ACHN (cell line): ENCODE measurements at regions of chr7 and their contacts with region 1.

Region 1: DNA sequence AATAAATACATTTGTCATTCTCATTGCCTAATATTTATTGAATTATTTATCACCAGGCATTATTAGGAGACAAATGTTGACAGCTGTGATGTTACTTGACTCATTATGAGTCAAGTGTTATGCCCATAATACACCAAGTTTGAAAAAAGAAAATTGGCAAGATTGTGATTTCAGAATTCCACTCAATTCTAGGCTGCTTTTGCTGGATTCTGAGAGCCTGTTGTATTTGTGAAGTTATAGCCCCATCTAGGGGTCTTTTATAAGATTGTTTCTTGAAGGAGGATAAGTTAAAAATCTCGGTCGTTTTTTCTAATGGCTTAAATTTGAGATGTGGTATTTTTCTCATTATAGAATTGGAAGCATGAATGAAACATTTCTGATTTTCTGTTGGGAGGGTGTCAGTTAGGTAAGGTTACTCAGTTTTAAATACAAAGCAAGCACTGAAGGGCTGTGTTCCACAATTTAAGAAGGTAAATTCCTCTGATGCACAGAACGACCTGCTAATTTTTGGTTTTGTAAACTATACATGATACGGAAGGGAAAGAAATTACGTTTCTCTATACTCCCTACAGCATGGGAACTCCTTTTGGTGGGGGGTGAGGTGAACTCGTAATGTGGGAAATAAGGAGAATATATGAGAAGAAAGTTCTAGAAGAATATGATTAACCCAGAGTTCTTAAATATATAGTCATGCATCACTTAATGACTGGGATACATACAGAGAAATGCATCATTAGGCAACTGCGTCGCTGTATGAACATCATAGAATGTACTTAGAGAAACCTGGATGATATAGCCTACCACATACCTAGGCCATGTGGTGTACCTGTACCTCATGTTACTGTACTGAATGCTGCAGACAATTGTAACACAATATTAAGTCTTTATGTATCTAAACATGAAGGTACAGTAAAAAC is 2.6 kb downstream of the STK31 start:
- DNase-seq: peak; percentile 89

Region 2: GRCh38 chr7:23273141-23273599 is 439.5 kb before region 1 on chr7:
- in situ Hi-C with region 1: loop called (anchors 25 kb)
- DNase-seq: peak; percentile 96

Region 3: DNA sequence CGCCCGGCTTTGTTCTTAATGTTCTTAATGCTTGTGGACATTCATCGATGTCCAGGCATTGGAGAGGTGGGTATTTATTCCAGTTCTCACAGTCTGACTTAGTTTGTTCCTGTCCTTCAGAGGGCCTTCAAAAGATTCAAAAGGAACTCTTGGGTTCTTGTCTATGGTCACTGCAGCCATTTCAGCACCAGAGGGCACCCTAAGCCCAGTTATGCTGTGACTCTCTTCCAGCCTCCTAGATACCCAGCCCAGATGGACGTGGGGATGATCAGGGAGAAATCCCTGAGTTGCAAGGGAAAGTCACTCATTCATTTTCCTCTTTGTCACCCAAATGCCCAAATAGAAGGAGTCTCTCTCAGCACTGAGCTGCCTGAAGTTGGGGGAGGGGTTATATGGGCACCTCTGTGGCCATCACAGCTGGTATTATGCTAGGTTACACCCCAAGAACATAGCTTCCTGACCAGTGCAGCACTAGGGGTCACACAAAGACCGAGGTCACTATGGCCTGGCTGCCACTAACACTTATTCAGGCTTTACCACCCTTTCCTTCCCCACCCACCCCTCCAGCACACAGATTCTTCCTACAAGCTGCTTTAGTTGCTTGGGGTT is 141.9 kb before region 1 on chr7:
- in situ Hi-C with region 1: loop called (anchors 10 kb)
- DNase-seq: peak; percentile 84